ENCODE measurements at regions of chr4 and their contacts with region 1.

Region 1: GRCh38 chr4:40301603-40302002 is 33.5 kb upstream of the CHRNA9 start:
- H3K4me3 ChIP-seq: no peak overlapping the region
- H3K27ac ChIP-seq: no peak overlapping the region
- H3K4me1 ChIP-seq: no peaks in the 10 kb centered on the region
- CTCF ChIP-seq: no peak

Region 2: DNA sequence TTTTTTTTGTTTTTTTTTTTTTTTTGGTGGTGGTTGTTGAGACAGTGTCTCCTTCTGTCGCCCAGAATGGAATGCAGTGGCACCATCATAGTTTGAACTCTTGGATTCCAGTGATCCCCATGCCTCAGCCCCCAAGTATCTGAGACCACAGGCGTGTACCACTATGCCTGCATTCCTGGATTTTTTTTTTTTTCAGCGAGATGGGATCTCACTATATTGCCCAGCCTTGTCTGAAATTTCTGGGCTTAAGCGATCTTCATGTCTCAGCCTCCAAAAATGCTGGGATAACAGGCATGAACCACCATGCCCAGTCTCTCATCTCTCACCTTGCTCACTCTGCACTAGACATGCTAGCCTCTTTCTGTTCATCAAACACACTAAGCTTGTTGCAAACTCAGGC is 499.6 kb before region 1 on chr4:
- CTCF ChIA-PET with region 1: no interaction called
- POLR2A ChIA-PET with region 1: no interaction called
- H3K4me3 ChIP-seq: no peak overlapping the region
- H3K27ac ChIP-seq: no peak overlapping the region
- H3K4me1 ChIP-seq: no peaks in the 10 kb centered on the region
- CTCF ChIP-seq: no peak

Region 3: DNA sequence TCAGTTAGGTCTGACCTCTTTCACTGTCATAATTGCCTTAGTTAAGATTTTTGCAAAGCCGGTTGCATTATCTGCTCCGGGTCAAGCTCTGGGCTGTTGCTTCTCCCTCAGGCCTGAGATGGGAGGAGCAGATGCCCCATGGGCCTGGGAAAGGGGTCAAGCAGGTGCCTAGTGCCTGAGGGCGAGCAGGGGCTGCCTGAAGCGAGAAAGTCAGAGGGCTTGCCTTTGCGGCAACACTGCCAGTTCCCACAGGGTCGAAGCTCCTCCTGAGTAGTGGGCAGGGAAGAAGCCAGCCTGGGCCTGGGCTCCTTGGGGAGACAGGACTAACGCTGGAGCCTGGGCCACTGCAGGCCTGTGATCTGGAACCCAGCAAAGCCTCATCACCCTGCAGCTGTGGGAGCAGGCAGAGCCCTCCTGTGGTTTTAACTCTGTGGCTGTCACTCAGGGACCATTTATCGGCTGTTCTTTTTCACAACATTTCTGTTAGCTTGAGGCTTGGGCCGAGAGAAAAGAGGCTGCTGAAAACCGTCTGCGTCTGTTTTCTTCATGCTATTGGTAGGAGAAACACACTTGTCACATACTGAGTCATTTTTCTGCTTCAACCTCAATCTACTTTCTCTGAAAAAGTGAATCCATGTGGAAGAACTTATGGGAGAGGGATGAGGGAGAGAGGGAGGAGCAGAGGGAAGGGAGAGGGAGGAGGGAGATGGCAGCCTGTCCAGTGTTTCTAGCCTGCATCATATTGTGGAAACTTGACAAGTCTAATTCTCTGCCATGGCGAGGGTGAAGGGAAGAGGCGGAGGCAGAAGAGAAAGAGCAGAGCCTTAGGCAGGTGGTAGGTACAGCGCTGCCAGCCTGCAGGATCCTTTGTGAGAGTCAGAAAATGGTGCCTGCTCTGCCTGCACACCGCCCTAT is 36.4 kb before region 1 on chr4:
- CTCF ChIA-PET with region 1: interaction called, 3 read pairs
- POLR2A ChIA-PET with region 1: interaction called, 10 read pairs
- H3K4me3 ChIP-seq: no peak overlapping the region
- H3K27ac ChIP-seq: peak overlapping the region; percentile 42; the same call in 1 of the 2 replicates
- H3K4me1 ChIP-seq: peaks cover 5% of the 10 kb centered on the region; the same call in 1 of the 2 replicates
- CTCF ChIP-seq: no peak

Measured in HEK293 (cell line).